Ascending aorta (tissue), 2 donors: ENCODE measurements at regions of chr18 and their contacts with region 1.

Region 1: DNA sequence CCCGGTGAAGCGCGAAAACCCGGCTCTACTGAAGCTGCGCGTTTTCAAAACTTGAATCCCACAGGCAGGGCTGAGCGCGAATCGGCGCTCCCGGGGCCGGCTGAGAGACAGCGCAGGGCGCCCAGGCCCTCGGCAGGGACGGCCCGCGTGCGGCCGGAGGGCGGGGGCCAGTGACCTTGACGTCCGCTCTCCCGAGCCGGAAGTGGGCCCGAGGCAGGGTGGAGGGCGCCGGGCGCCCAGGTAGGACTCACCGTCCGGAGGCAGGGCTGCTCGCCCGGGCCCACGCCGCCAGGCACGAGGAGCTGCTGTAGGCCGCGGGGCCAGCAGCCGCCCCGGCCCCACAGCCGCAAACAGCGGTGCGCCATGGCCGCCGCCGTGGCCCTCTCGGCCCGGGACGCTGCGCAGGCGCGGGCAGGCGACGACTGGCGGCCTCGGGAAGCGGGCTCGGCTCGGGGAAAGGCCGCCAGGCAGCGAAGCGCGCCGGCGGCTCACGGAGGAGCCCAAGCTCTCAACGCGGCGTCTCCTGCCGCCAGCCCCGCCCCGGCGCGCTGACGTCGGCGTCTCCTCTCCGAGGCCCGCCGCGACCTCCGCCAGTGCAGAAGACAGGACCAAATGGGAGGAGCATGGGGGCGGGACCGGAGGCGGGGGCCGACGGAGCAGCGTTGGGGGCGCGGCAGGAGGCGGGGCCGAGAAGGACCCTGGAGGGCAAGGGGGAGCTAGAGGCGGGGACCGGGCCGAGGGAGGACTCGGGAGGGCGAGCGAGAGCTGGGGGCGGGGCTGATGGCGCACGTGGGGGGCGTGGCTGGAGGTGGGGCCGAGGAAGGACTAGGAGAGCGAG is at the start of gene AFG3L2:
- DNase-seq: peak; percentile 98 to 100
- H3K4me3 ChIP-seq: peak within 1 kb of the TSS; percentile 89 to 92
- H3K27ac ChIP-seq: peak within 1 kb of the TSS; percentile 99 to 100
- H3K4me1 ChIP-seq: peaks cover 6 to 16% of the 10 kb centered on the region in 2 donors
- H3K27me3 ChIP-seq: no peaks in the 10 kb centered on the region
- CTCF ChIP-seq: no peak
- total RNA-seq, gene AFG3L2: 31.5 TPM

Region 2: DNA sequence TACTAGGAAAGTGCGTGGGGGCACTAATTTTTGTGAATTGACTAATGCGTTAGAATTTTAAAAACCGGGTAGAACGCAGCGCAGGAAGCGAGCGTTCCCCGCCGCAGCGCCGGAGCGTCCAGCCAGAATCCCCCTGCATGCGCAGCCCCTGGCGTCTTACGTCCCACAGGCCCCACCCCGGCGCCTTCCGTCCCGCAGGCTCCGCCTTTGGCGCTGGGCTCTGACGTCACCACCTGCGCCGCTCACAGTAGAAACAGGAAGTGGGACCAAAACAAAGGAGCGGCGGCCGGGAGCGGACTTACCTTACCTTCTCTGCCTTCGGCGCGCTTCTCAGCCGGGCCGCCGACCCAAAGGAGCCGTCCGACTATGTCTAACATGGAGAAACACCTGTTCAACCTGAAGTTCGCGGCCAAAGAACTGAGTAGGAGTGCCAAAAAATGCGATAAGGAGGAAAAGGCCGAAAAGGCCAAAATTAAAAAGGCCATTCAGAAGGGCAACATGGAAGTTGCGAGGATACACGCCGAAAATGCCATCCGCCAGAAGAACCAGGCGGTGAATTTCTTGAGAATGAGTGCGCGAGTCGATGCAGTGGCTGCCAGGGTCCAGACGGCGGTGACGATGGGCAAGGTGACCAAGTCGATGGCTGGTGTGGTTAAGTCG is 525.7 kb before region 1 on chr18 and contains the start of gene CHMP1B:
- intact Hi-C with region 1: loop called (anchors 2 kb)
- DNase-seq: peak; percentile 94 to 99
- H3K4me3 ChIP-seq: peak within 1 kb of the TSS; percentile 75 to 86
- H3K27ac ChIP-seq: peak within 1 kb of the TSS; percentile 87 to 92
- H3K4me1 ChIP-seq: peaks cover 4 to 20% of the 10 kb centered on the region in 2 donors
- H3K27me3 ChIP-seq: no peaks in the 10 kb centered on the region
- CTCF ChIP-seq: no peak
- total RNA-seq, gene CHMP1B: 25.5 TPM

Region 3: DNA sequence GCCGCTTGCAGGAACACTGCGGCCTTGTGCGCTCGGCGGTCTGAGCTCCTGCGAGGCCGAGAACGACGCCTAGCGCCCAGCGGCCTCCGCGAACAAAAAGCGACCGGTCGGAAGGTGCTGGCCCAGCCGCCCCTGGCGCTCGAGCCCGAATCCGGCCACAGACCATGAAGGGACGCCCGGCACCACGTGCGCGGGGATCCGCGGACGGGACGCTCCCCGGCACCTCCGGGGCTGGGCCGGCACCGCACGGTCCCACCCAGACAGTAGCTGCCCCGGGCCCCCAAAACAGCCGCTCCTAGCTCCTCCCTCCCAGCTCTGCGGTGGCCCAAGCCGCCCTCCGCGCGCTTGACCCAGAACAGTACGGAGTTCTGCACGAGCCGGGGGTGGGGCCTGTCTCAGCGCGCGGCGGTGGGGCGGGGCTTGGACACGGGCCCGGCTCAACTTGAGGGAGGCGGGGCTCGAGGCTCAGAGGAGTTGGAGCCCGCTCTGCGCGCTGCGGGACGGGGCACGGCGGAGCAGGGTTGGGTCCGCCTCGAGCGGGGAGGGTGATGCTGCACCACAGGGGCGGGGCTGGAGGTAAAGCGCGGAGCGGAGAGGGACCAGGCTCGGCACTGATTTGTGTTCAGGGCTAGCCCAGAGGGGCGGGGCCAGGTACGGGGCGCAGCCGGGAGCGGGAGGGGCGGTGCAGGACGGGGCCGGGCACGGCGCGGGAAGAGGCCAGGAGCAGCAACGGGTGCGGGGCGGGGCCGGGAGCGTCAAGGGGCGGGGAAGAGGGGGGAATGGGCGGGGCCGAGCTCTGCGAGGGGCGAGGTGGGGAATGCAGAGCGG is 396.2 kb before region 1 on chr18:
- intact Hi-C with region 1: loop called (anchors 2 kb)
- DNase-seq: peak; percentile 95 to 99
- H3K4me3 ChIP-seq: peak overlapping the region; percentile 59 to 100
- H3K27ac ChIP-seq: peak overlapping the region; percentile 87 to 92
- H3K4me1 ChIP-seq: peaks cover 0 to 12% of the 10 kb centered on the region in 2 donors
- H3K27me3 ChIP-seq: no peaks in the 10 kb centered on the region
- CTCF ChIP-seq: peak in 1 of 3 experiments; percentile 32

Region 4: GRCh38 chr18:12005538-12006487 is 371.1 kb before region 1 on chr18:
- intact Hi-C with region 1: no loop called
- DNase-seq: no peak
- H3K4me3 ChIP-seq: no peak overlapping the region
- H3K27ac ChIP-seq: no peak overlapping the region
- H3K4me1 ChIP-seq: no peaks in the 10 kb centered on the region
- H3K27me3 ChIP-seq: no peaks in the 10 kb centered on the region
- CTCF ChIP-seq: no peak

Region 5: GRCh38 chr18:12308386-12309100 is 68.4 kb before region 1 on chr18:
- intact Hi-C with region 1: loop called (anchors 1 kb)
- DNase-seq: peak; percentile 29 to 95
- H3K4me3 ChIP-seq: peak overlapping the region; percentile 72 to 95
- H3K27ac ChIP-seq: peak overlapping the region; percentile 97 to 98
- H3K4me1 ChIP-seq: peaks cover 15 to 20% of the 10 kb centered on the region in 2 donors
- H3K27me3 ChIP-seq: no peaks in the 10 kb centered on the region
- CTCF ChIP-seq: no peak

Region 6: GRCh38 chr18:12417687-12418086 is 40.8 kb after region 1 on chr18:
- intact Hi-C with region 1: no loop called
- DNase-seq: no peak
- H3K4me3 ChIP-seq: no peak overlapping the region
- H3K27ac ChIP-seq: no peak overlapping the region
- H3K4me1 ChIP-seq: peaks cover 7 to 18% of the 10 kb centered on the region in 2 donors
- H3K27me3 ChIP-seq: no peaks in the 10 kb centered on the region
- CTCF ChIP-seq: no peak

Region 7: DNA sequence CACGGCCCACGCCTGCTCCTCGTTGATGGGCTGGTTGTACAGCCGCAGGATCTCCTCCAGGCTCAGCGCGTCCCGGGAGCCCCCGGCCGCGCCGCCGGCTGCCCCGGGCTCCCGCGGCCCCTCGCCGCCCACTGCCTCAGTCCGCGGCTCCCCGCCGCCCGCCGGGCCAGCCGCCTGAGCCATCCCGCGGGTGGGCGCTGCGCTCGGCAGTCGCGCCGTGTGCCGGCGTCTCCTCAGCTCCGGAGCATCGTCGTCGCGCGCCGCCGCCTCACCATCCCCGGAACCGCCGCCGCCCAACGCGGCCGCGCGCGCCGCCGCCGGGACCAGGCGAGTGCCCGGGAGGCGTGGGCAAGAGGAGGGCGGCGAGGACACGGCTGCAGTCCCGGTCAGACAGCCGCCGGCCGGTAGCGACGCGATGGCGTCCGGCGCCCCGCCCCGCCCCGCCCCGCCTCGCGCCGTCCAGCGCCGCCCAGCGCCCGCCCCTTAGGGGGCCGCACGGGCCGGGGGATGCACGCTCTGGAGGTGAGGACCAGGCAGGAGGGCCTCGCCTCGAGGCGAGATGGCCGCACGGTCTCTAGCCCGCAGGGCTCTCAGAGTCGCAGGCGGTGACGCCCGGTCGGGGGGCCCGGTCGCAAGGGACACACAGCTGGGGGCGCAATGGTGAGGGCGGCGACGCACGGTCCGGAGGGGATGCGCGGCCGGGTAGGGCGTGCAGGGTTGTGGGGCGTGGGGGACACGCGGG is 280.9 kb after region 1 on chr18 and contains the start of gene SPIRE1:
- intact Hi-C with region 1: loop called (anchors 1 kb)
- DNase-seq: peak in 1 of 2 donors; percentile 86
- H3K4me3 ChIP-seq: peak within 1 kb of the TSS; percentile 91 to 94
- H3K27ac ChIP-seq: peak within 1 kb of the TSS; percentile 99 to 100
- H3K4me1 ChIP-seq: peaks cover 0 to 22% of the 10 kb centered on the region in 2 donors
- H3K27me3 ChIP-seq: no peaks in the 10 kb centered on the region
- CTCF ChIP-seq: peak in 1 of 3 experiments; percentile 7
- total RNA-seq, gene SPIRE1: 16.9 TPM

Region 8: GRCh38 chr18:12883684-12884405 is 506.9 kb after region 1 on chr18 and contains the start of gene PTPN2:
- intact Hi-C with region 1: loop called (anchors 1 kb)
- DNase-seq: peak; percentile 85 to 96
- H3K4me3 ChIP-seq: peak within 1 kb of the TSS; percentile 71 to 88
- H3K27ac ChIP-seq: peak within 1 kb of the TSS; percentile 99
- H3K4me1 ChIP-seq: peaks cover 0 to 6% of the 10 kb centered on the region in 2 donors
- H3K27me3 ChIP-seq: no peaks in the 10 kb centered on the region
- CTCF ChIP-seq: no peak
- total RNA-seq, gene PTPN2: 81.8 TPM